ENCODE measurements at regions of chr3 and their contacts with region 1.

Region 1: GRCh38 chr3:73508330-73508954 is 116.3 kb downstream of the PDZRN3 start:
- DNase-seq: peak; percentile 92
- H3K4me3 ChIP-seq: no peak overlapping the region
- H3K27ac ChIP-seq: peak overlapping the region; percentile 86 to 88 (median 87)
- H3K4me1 ChIP-seq: peaks cover 45 to 95% (median 86%) of the 10 kb centered on the region in 4 donors
- H3K27me3 ChIP-seq: no peaks in the 10 kb centered on the region
- CTCF ChIP-seq: peak; percentile 70 to 77 (median 77)
- EP300 ChIP-seq: no peak
- POLR2A ChIP-seq: no peak

Region 2: GRCh38 chr3:73432023-73432705 is 76.3 kb before region 1 on chr3:
- intact Hi-C with region 1: loop called (anchors 5 kb)
- DNase-seq: no peak
- H3K4me3 ChIP-seq: peak overlapping the region; percentile 8 to 36 (median 13)
- H3K27ac ChIP-seq: peak overlapping the region; percentile 7 to 42 (median 24)
- H3K4me1 ChIP-seq: peaks cover 45 to 91% (median 78%) of the 10 kb centered on the region in 4 donors
- H3K27me3 ChIP-seq: no peaks in the 10 kb centered on the region
- CTCF ChIP-seq: peak; percentile 66 to 71 (median 69)
- EP300 ChIP-seq: no peak
- POLR2A ChIP-seq: no peak

Region 3: GRCh38 chr3:73602170-73602569 is 93.7 kb after region 1 on chr3:
- intact Hi-C with region 1: loop called (anchors 5 kb)
- DNase-seq: no peak
- H3K4me3 ChIP-seq: no peak overlapping the region
- H3K27ac ChIP-seq: peak overlapping the region; percentile 67 to 95 (median 85)
- H3K4me1 ChIP-seq: peaks cover 82 to 100% (median 97%) of the 10 kb centered on the region in 4 donors
- H3K27me3 ChIP-seq: no peaks in the 10 kb centered on the region
- CTCF ChIP-seq: no peak
- EP300 ChIP-seq: no peak
- POLR2A ChIP-seq: no peak

Region 4: GRCh38 chr3:73624821-73625665 is 116.6 kb after region 1 on chr3 and contains the start of gene PDZRN3:
- intact Hi-C with region 1: loop called (anchors 2 kb)
- DNase-seq: no peak
- H3K4me3 ChIP-seq: peak within 1 kb of the TSS; percentile 76 to 96 (median 88)
- H3K27ac ChIP-seq: peak within 1 kb of the TSS; percentile 88 to 97 (median 92)
- H3K4me1 ChIP-seq: peaks cover 16 to 43% (median 40%) of the 10 kb centered on the region in 4 donors
- H3K27me3 ChIP-seq: no peaks in the 10 kb centered on the region
- CTCF ChIP-seq: no peak
- EP300 ChIP-seq: no peak
- POLR2A ChIP-seq: no peak
- total RNA-seq, gene PDZRN3: 149 to 314 (median 220) TPM

Region 5: DNA sequence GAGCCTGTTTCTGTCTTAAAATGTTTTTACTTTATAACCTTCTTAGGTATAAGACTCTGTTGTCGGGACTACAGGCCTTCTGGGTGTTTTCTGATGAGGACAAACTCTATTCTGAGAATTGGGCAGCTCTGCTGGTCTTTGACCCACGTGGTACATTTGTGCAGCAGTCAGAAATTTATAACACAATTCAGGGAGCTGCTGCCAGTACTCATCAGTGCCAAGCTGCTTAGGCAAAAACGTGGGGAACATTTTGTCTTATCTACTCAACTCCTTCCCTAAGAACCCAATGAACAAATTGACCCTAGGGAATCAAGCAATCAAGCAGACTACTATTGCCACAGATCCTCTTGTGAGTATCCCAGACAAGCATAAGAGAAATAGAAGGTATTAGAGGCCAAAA is 297.0 kb after region 1 on chr3:
- intact Hi-C with region 1: loop called (anchors 5 kb)
- DNase-seq: no peak
- H3K4me3 ChIP-seq: no peak overlapping the region
- H3K27ac ChIP-seq: peak overlapping the region; percentile 28 to 63 (median 46)
- H3K4me1 ChIP-seq: peaks cover 3 to 17% (median 14%) of the 10 kb centered on the region in 4 donors
- H3K27me3 ChIP-seq: no peaks in the 10 kb centered on the region
- CTCF ChIP-seq: no peak
- EP300 ChIP-seq: no peak
- POLR2A ChIP-seq: no peak

Region 6: DNA sequence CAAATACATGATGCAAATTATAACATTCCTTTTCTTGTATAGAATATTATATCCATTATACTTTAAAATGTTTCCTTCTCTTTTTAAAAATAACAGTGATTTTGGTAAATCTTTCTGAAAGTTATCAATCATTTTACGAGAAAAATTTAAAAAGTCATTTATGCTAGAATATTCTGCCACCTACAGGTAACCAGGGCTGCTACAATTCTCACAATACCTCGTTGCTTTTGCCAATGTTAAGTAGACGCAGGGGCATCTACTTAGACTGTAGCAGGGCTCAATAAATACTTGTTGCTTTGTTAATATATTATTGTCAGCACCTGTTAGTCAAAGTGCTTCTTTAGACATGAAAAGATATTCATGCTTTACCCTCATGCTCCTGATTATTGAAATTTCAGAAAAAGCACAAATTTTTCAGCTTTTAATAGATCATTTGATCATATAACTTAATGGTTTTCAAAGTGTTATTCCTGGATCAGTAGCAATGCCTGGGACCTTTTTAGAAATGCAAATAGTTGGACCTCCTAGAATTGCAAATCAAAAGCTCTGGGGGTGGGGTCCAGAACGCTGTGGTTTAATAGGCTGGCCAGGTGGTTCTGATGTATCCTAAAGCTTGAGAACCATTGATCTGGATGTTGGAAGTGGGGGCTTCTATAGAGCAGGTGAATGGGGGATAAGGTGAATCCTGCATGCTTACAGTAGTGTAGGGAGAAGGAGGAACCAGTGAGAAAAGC is 339.9 kb after region 1 on chr3:
- intact Hi-C with region 1: loop called (anchors 5 kb)
- DNase-seq: no peak
- H3K4me3 ChIP-seq: no peak overlapping the region
- H3K27ac ChIP-seq: no peak overlapping the region
- H3K4me1 ChIP-seq: no peaks in the 10 kb centered on the region
- H3K27me3 ChIP-seq: no peaks in the 10 kb centered on the region
- CTCF ChIP-seq: peak; percentile 72 to 77 (median 72)
- EP300 ChIP-seq: no peak
- POLR2A ChIP-seq: no peak

Measured in esophagus muscularis mucosa (tissue), 4 donors.